ENCODE measurements at regions of chr6 and their contacts with region 1.

Region 1: DNA sequence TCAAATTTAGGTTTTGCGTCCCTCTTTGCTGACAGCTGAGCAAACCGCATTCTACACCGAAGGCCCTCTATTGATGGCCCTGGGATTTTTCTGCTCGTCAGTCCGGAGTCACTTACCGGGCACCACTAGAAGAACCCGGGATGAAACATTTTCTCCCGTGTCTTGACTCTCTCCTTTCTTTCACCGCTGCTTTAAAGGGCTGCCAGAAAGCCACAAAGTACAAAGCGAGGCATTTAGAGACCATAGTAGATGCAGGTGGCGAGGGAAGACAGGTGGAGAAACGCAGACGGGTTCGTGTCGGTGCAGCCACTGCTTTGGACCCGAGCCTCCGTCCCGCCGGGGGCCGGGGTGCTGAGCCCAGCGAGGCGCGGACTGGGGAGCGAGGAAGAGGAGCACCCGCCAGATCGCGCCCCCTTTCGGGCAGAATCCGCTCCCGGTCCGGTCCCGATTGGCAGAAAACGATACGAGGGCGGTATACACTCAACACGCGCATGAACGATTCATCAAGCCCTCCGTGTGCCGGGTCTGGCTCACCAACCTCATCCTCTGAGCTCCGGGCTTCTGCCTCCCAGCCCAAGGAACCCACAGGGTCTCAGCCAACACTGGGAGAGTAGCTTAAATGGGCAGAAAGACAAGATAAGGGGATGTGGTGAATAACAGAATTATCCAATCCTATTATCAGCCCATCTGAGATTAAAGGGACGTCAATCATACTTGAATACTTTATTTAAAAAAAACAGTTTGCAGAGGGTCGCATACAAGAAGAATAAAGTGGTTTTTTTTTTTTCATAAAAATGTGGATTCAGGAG is 84.9 kb downstream of the TRIM27 start:
- DNase-seq: peak; percentile 85
- ATAC-seq: peak; percentile 80
- H3K4me3 Mint-ChIP-seq: peak overlapping the region; percentile 93
- H3K27ac Mint-ChIP-seq: peak overlapping the region; percentile 86
- H3K4me1 Mint-ChIP-seq: peaks cover 23% of the 10 kb centered on the region
- H3K27me3 Mint-ChIP-seq: peaks cover 42% of the 10 kb centered on the region

Region 2: GRCh38 chr6:28940858-28941680 is 102.2 kb after region 1 on chr6:
- POLR2A ChIA-PET with region 1: interaction called, 10 read pairs
- DNase-seq: peak; percentile 60
- ATAC-seq: peak; percentile 66
- H3K4me3 Mint-ChIP-seq: peak overlapping the region; percentile 86
- H3K27ac Mint-ChIP-seq: peak overlapping the region; percentile 95
- H3K4me1 Mint-ChIP-seq: peaks cover 36% of the 10 kb centered on the region
- H3K27me3 Mint-ChIP-seq: peaks cover 4% of the 10 kb centered on the region

Region 3: DNA sequence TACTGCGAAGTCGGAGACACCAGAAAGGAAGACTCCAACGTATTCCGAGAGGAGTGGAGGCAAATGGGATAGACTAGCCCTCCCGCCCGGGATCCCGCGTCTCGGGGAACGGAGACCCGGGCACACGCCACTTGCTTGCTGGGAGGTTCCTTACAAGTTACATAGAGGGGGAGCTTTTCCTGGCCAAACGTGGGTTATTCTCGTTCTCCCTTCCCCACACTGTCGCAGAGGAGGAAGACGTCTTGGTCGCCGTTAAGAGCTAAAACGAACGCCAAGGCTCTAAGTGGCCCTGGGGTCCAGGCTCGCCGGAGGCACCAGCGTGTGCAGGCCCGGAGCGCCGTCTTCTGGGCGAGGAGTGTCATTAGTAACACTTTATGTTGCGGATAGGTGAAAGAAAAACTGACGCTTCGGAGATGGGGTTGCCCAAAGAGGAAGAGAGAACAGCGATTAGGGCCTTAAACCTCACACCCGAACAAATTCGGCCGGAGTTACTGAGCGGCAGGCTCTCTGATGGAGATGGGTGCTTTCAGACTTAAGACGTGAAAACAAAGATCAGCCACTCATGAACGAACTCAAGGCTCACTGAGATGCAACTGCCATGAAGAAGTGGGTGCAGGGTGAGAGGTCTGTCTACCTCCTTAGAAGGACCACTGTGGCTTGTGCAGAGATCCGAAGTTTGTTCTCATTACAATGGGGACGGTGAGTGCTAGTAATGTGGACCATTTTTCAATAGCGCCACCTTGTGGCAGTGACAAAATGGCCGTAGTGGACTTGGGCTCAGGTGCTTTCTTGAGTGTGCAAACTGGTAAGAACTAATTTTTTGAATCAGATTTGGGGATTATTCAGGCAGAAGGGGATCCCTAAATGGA is 178.0 kb after region 1 on chr6:
- POLR2A ChIA-PET with region 1: interaction called, 27 read pairs
- DNase-seq: peak; percentile 82
- ATAC-seq: peak; percentile 88
- H3K4me3 Mint-ChIP-seq: peak overlapping the region; percentile 89
- H3K27ac Mint-ChIP-seq: peak overlapping the region; percentile 88
- H3K4me1 Mint-ChIP-seq: peaks cover 14% of the 10 kb centered on the region
- H3K27me3 Mint-ChIP-seq: peaks cover 33% of the 10 kb centered on the region

Measured in activated naive CD8-positive, alpha-beta T cell treated with anti-CD3 and anti-CD28 coated beads, Interleukin-2, amount 10 ng/mL, durations not matched to agents 7 days and 5 days (primary cell).